ENCODE measurements at regions of chr19 and their contacts with region 1.

Region 1: DNA sequence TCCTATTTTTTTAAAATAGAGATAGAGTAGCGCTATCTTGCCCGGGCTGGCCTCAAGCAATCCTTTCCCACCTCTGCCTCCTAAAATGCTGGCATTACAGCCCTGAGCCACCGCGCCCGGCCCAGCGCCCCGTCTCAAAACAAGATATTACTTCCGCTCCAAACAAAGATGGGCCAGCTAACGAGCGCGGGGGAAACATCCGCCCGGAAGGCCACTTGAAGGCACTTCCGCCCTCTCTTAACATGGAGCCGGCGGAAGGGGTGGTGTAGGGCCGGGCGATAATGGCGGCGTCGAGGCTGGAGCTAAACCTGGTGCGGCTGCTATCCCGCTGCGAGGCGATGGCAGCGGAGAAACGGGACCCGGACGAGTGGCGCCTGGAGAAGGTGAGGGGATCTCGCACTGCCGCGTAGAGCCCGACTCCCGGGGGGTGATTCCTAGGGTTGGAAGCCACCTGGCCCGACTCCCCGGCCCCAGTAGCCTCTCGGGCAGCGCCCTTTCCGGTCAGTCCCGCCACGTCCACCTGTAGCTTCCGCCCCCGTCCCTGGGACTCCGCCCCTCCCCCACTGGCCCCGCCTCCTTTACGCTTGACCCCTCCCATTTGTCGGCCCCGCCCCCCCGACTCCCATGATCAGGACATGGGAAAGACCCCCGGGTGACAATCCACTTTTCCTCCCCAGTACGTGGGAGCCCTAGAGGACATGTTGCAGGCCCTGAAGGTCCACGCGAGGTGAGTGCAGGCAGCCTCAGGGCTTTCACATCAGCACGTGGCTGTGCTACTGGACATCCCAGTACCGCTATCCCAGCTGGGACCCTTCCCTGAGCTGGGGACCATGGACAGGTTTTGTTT is at the start of gene USE1:
- DNase-seq: peak; percentile 76 to 96 (median 88)
- ATAC-seq: peak; percentile 95
- H3K4me3 ChIP-seq: peak within 1 kb of the TSS; percentile 80 to 90
- H3K4me3 Mint-ChIP-seq: peak within 1 kb of the TSS; percentile 90
- H3K27ac ChIP-seq: peak within 1 kb of the TSS; percentile 65 to 97
- H3K27ac Mint-ChIP-seq: peak within 1 kb of the TSS; percentile 99
- H3K4me1 ChIP-seq: peaks cover 13% of the 10 kb centered on the region
- H3K4me1 Mint-ChIP-seq: peaks cover 15% of the 10 kb centered on the region
- H3K27me3 ChIP-seq: no peaks in the 10 kb centered on the region
- H3K27me3 Mint-ChIP-seq: no peaks in the 10 kb centered on the region
- CTCF ChIP-seq: no peak
- total RNA-seq, gene USE1: 23.1 to 25.3 TPM

Region 2: GRCh38 chr19:17125715-17126677 is 89.4 kb before region 1 on chr19:
- CTCF ChIA-PET with region 1: no interaction called
- POLR2A ChIA-PET with region 1: interaction called, 15 read pairs
- intact Hi-C with region 1: no loop called
- DNase-seq: peak; percentile 60 to 95 (median 80)
- ATAC-seq: peak; percentile 81
- H3K4me3 ChIP-seq: peak overlapping the region; percentile 40 to 41
- H3K4me3 Mint-ChIP-seq: peak overlapping the region; percentile 83
- H3K27ac ChIP-seq: peak overlapping the region; percentile 85 to 89
- H3K27ac Mint-ChIP-seq: peak overlapping the region; percentile 99
- H3K4me1 ChIP-seq: peaks cover 52% of the 10 kb centered on the region
- H3K4me1 Mint-ChIP-seq: peaks cover 71% of the 10 kb centered on the region
- H3K27me3 ChIP-seq: no peaks in the 10 kb centered on the region
- H3K27me3 Mint-ChIP-seq: no peaks in the 10 kb centered on the region
- CTCF ChIP-seq: no peak

Region 3: DNA sequence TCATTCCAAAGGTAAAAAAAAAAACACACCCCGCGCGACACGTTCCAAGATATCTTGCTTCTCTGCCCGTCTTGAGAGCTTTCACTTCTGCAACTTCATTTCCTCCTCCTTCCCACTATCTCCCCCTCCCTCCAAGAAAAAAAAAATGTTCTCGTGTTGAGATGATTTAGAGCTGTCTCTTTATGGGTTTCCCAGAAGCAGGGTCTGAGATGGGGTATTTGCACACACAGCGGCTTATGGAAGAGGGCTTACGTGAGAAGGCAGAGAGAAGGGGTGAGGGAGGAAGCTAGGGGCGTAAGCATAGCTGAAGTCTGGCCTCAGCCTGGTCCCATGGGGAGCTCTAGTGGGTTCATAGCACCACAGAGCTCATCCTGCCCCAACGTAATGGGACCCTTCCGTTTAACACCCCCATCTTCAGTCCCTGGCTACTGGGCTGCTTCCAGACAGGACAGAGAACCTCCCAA is 31.5 kb before region 1 on chr19:
- CTCF ChIA-PET with region 1: no interaction called
- POLR2A ChIA-PET with region 1: interaction called, 18 read pairs
- intact Hi-C with region 1: no loop called
- DNase-seq: peak in 6 of 9 experiments; percentile 19 to 71 (median 42)
- ATAC-seq: peak; percentile 56
- H3K4me3 ChIP-seq: peak overlapping the region; percentile 36 to 52
- H3K4me3 Mint-ChIP-seq: peak overlapping the region; percentile 92
- H3K27ac ChIP-seq: peak overlapping the region; percentile 57 to 78
- H3K27ac Mint-ChIP-seq: peak overlapping the region; percentile 97
- H3K4me1 ChIP-seq: peaks cover 20% of the 10 kb centered on the region
- H3K4me1 Mint-ChIP-seq: peaks cover 32% of the 10 kb centered on the region
- H3K27me3 ChIP-seq: no peaks in the 10 kb centered on the region
- H3K27me3 Mint-ChIP-seq: no peaks in the 10 kb centered on the region
- CTCF ChIP-seq: no peak

Region 4: GRCh38 chr19:17226002-17226933 is 10.9 kb after region 1 on chr19 and contains the start of gene OCEL1:
- CTCF ChIA-PET with region 1: interaction called, 7 read pairs
- POLR2A ChIA-PET with region 1: interaction called, 65 read pairs
- intact Hi-C with region 1: loop called (anchors 1 kb)
- DNase-seq: peak; percentile 92 to 99 (median 96)
- ATAC-seq: peak; percentile 91
- H3K4me3 ChIP-seq: peak within 1 kb of the TSS; percentile 71 to 100
- H3K4me3 Mint-ChIP-seq: peak within 1 kb of the TSS; percentile 91
- H3K27ac ChIP-seq: peak within 1 kb of the TSS; percentile 89 to 96
- H3K27ac Mint-ChIP-seq: peak within 1 kb of the TSS; percentile 95
- H3K4me1 ChIP-seq: peaks cover 13% of the 10 kb centered on the region
- H3K4me1 Mint-ChIP-seq: peaks cover 8% of the 10 kb centered on the region
- H3K27me3 ChIP-seq: no peaks in the 10 kb centered on the region
- H3K27me3 Mint-ChIP-seq: no peaks in the 10 kb centered on the region
- CTCF ChIP-seq: no peak
- total RNA-seq, gene OCEL1: 20.9 to 24.9 TPM

Region 5: GRCh38 chr19:17235618-17236377 is 20.4 kb after region 1 on chr19:
- CTCF ChIA-PET with region 1: interaction called, 4 read pairs
- POLR2A ChIA-PET with region 1: interaction called, 14 read pairs
- intact Hi-C with region 1: loop called in 1 of 2 experiments (anchors 2 kb)
- DNase-seq: peak; percentile 52 to 91 (median 78)
- ATAC-seq: peak; percentile 89
- H3K4me3 ChIP-seq: peak overlapping the region; percentile 63 to 86
- H3K4me3 Mint-ChIP-seq: peak overlapping the region; percentile 78
- H3K27ac ChIP-seq: peak overlapping the region in 1 of 2 experiments; percentile 40
- H3K27ac Mint-ChIP-seq: no peak overlapping the region
- H3K4me1 ChIP-seq: peaks cover 13% of the 10 kb centered on the region
- H3K4me1 Mint-ChIP-seq: peaks cover 10% of the 10 kb centered on the region
- H3K27me3 ChIP-seq: no peaks in the 10 kb centered on the region
- H3K27me3 Mint-ChIP-seq: no peaks in the 10 kb centered on the region
- CTCF ChIP-seq: peak; percentile 58

Region 6: DNA sequence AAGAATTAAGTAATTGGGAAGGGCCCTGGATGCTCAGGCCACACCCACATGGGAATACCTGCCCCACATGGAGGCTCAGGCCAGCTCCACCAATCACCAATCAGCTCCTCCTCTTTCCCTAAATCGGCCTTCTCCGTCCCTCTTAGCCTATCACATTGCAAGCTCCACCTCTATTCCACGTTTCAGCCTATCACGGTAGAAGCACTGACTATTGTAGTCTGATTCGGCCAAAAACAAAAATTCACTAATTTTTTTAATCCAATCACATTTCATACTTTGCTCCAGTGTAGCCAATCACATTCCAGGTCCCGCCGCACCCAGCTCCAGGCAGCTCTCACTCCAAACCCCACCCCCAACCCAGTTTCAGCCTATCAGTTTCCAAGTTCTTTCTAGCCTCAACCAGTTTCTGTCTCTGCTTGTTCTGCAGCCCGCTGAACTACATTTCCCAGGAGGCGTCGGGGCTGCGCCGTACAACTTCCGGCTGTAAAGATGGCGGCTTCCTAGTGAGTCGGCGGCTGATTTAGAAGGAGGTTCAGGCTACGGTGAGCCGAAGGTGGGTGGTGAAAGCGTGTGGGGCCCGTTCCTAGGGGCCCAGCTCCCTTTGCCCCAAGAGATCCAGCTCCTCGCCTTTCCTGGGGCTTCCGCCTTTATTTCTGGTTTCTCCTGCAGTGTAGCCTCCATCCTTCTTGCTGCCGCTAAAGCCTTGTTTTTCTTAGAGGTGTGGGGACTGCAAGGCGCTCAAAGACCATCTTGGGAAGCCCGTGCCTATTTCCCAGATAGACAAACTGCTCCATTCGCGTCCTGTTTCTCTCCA is 51.8 kb after region 1 on chr19 and contains the start of gene BABAM1:
- CTCF ChIA-PET with region 1: no interaction called
- POLR2A ChIA-PET with region 1: interaction called, 11 read pairs
- intact Hi-C with region 1: loop called (anchors 1 kb)
- DNase-seq: peak; percentile 81 to 98 (median 92)
- ATAC-seq: peak; percentile 93
- H3K4me3 ChIP-seq: peak within 1 kb of the TSS; percentile 72 to 82
- H3K4me3 Mint-ChIP-seq: peak within 1 kb of the TSS; percentile 79
- H3K27ac ChIP-seq: peak within 1 kb of the TSS; percentile 61 to 77
- H3K27ac Mint-ChIP-seq: peak within 1 kb of the TSS; percentile 63
- H3K4me1 ChIP-seq: peaks cover 14% of the 10 kb centered on the region
- H3K4me1 Mint-ChIP-seq: peaks cover 18% of the 10 kb centered on the region
- H3K27me3 ChIP-seq: no peaks in the 10 kb centered on the region
- H3K27me3 Mint-ChIP-seq: no peaks in the 10 kb centered on the region
- CTCF ChIP-seq: no peak
- total RNA-seq, gene BABAM1: 46.9 to 58.0 TPM

Region 7: DNA sequence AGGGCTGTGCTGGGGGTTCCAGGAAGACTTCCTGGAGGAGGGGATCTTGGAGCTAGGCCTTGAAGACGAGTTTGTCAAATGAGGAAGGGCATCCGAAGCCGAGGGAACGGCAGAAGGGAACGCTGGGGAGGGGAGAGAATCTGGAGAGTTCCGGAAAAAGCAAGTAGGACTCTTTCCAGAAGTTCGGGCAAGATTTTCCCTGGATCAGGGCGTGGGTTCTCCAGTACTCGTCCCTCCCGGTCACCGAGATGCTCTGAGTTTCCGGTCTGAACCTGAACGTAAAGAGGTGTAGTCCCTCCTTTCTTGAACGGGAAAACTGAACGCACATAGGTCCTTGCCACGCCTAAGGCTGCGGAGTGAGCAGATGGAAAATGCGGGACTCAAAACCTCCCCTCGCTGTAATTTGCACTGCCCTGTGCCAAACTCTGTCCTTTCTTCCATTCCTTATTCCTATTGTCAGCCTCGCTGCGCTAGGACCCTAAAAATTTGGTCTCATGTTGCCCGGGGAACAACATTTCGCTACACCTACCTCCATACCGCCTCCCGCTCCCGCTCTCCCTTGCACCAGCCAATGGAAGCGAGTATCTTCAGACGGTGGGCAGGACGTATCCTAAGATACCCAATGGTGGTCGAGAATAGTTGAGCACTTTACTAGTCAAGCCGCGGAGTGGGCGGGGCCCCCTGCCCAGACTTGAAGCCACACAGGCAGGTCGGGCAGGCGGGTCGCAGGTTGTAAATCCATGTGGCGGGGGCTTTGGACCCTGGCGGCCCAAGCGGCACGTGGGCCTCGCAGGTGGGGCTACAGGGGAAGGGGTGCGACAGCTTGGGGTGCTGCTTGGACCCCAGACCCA is 121.7 kb after region 1 on chr19 and contains the start of gene GTPBP3:
- CTCF ChIA-PET with region 1: no interaction called
- POLR2A ChIA-PET with region 1: interaction called, 3 read pairs
- intact Hi-C with region 1: loop called in 1 of 2 experiments (anchors 1 kb)
- DNase-seq: peak; percentile 90 to 99 (median 95)
- ATAC-seq: peak; percentile 90
- H3K4me3 ChIP-seq: peak within 1 kb of the TSS; percentile 90 to 98
- H3K4me3 Mint-ChIP-seq: peak within 1 kb of the TSS; percentile 88
- H3K27ac ChIP-seq: peak within 1 kb of the TSS; percentile 75 to 91
- H3K27ac Mint-ChIP-seq: peak within 1 kb of the TSS; percentile 91
- H3K4me1 ChIP-seq: peaks cover 34% of the 10 kb centered on the region
- H3K4me1 Mint-ChIP-seq: peaks cover 34% of the 10 kb centered on the region
- H3K27me3 ChIP-seq: no peaks in the 10 kb centered on the region
- H3K27me3 Mint-ChIP-seq: no peaks in the 10 kb centered on the region
- CTCF ChIP-seq: no peak
- total RNA-seq, gene GTPBP3: 20.8 to 25.7 TPM

Region 8: DNA sequence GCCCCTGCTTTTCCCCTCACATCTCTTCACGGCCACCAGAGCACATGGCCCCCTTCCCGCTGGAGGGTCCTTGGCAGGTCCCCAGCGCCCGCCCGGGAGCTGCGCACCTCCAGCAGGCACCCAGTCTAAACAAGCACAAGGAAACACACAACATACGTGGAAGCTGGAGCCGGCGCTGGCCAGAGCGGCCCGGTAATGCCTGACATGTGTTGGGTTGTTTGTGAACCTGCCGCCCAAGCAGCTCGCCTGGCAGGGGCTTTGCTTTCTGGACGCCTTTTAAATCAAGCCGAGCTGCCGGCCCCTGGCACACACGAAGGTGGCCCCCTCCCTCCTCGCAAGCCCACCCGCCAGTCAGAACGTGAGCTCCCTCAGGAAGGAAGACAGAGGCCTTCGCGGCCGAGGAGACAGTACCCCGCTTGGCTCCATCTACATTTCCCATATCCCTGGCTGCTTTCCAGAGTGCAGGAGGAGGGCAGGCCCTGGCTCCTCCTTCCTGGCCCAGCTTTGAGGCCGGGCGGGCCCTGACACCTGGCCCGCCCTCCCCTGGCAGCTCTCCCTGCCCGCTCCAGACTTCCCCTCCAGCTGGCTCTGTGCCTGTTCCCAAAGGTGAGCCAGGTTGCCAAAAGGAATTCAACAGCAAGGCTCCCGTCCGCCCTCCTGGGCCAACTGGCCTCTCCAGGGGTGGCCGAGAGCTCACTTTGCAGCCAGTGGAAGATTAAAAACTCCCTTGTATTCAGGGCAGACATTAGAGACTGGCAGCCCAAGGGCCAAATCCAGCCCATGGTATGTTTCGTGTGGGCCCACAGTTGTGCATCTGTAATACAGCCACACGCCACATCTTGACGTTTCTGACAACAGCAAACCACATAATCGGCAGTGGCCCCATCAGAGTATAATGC is 1547.0 kb after region 1 on chr19:
- CTCF ChIA-PET with region 1: no interaction called
- POLR2A ChIA-PET with region 1: no interaction called
- intact Hi-C with region 1: no loop called
- DNase-seq: no peak
- ATAC-seq: no peak
- H3K4me3 ChIP-seq: no peak overlapping the region
- H3K4me3 Mint-ChIP-seq: no peak overlapping the region
- H3K27ac ChIP-seq: no peak overlapping the region
- H3K27ac Mint-ChIP-seq: no peak overlapping the region
- H3K4me1 ChIP-seq: no peaks in the 10 kb centered on the region
- H3K4me1 Mint-ChIP-seq: no peaks in the 10 kb centered on the region
- H3K27me3 ChIP-seq: no peaks in the 10 kb centered on the region
- H3K27me3 Mint-ChIP-seq: no peaks in the 10 kb centered on the region
- CTCF ChIP-seq: no peak

Measured in CD8-positive, alpha-beta T cell (primary cell).